ENCODE measurements at regions of chr19 and their contacts with region 1.

Region 1: GRCh38 chr19:5622463-5623396 is at the starts of genes SAFB and SAFB2:
- DNase-seq: peak; percentile 96 to 99 (median 97)
- H3K4me3 ChIP-seq: peak within 1 kb of the TSS; percentile 77 to 100 (median 98)
- H3K27ac ChIP-seq: peak within 1 kb of the TSS; percentile 80 to 99 (median 96)
- H3K27me3 ChIP-seq: no peaks in the 10 kb centered on the region
- CTCF ChIP-seq: peak in 30 of 56 donors; percentile 7 to 60 (median 32)
- total RNA-seq, gene SAFB: 102 to 184 (median 133) TPM
- total RNA-seq, gene SAFB2: 117 to 326 (median 190) TPM

Region 2: DNA sequence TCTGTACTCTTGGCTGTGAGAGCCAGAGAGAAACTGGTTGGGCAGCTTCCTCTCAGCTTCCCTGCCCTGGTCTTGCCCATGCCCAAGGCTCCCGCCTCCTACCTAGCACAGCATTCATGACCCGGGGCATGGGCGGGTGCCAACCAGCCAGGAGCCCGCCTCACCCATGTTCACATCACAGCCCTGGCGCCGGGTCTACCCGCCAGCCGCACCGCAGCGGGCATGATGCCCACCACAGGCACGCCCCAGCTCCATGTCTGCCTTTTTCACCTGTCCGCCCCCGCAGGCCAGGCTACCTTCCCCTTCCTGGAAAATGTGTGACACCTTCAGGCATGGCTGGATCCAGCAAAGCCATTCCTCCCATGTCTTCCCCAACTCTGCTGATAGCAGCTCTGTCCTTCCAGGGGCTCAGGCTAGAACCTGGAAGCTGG is 324.2 kb before region 1 on chr19:
- intact Hi-C with region 1: loop called in 1 of 2 experiments (anchors 5 kb)
- DNase-seq: no peak
- H3K4me3 ChIP-seq: no peak overlapping the region
- H3K27ac ChIP-seq: no peak overlapping the region
- H3K27me3 ChIP-seq: no peaks in the 10 kb centered on the region
- CTCF ChIP-seq: no peak

Region 3: GRCh38 chr19:5436106-5436947 is 186.4 kb before region 1 on chr19:
- intact Hi-C with region 1: no loop called
- DNase-seq: peak; percentile 38 to 92 (median 84)
- H3K4me3 ChIP-seq: peak overlapping the region in 57 of 59 donors; percentile 23 to 65 (median 51)
- H3K27ac ChIP-seq: peak overlapping the region in 19 of 59 donors; percentile 4 to 70 (median 44)
- H3K27me3 ChIP-seq: peaks cover 0 to 22% (median 0%) of the 10 kb centered on the region in 45 donors
- CTCF ChIP-seq: no peak

Region 4: DNA sequence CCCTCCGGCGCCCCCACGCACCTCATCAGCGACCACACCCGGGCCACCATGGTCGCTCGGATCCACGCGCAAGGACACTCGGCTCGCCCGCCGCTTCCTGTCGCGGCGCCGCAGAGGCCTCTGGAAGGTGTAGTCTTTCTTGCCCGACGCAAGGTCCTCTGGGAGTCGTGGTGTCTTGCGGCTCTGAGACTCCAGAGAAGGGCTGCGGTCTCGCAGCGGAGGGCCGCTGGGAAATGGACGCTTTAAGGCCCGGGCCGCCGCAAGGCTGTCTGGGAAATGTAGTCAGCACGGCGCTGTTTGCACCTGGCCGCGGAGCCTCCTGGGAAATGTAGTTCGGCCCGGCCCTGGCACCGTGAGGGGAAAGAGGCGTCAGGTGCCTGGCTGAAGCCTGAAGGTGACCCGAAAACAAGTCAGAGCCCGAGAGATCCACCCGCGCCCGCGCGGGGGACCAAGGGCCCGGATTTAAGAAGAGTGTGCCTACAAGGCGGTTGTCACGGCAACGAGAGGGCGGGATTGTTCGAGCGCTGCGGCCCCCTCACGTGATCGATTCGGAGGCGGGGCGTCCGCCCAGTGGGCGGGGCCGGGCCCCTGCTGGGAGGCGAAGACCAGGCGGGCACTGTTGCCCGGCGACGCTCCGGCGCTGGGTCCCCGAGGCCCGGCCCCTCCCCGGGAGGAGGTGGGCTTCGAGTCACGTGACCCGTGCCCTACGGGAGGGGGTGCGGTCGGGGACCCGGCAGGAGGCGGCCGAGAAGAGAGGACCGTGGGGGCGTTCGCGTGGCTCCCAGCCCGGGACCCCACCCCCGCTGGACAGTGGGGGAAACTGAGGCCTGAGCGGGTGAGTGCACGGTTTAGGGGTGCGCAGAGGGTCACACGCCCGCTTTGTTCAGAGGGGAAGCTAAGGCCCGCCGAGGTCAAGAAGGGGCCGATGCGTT is 58.0 kb after region 1 on chr19 and contains the starts of genes HSD11B1L and MICOS13:
- intact Hi-C with region 1: loop called (anchors 2 kb)
- DNase-seq: peak; percentile 99 to 100 (median 99)
- H3K4me3 ChIP-seq: peak within 1 kb of the TSS; percentile 64 to 100 (median 91)
- H3K27ac ChIP-seq: peak within 1 kb of the TSS; percentile 80 to 99 (median 96)
- H3K27me3 ChIP-seq: no peaks in the 10 kb centered on the region
- CTCF ChIP-seq: peak in 36 of 56 donors; percentile 3 to 54 (median 35)
- total RNA-seq, gene HSD11B1L: 20.4 to 80.3 (median 55.4) TPM
- total RNA-seq, gene MICOS13: 42.0 to 91.5 (median 69.5) TPM

Region 5: GRCh38 chr19:5903056-5903623 is 280.4 kb after region 1 on chr19:
- intact Hi-C with region 1: no loop called
- DNase-seq: no peak
- H3K4me3 ChIP-seq: peak overlapping the region; percentile 69 to 100 (median 94)
- H3K27ac ChIP-seq: peak overlapping the region in 58 of 59 donors; percentile 31 to 94 (median 86)
- H3K27me3 ChIP-seq: no peaks in the 10 kb centered on the region
- CTCF ChIP-seq: no peak